ENCODE measurements at regions of chr9 and their contacts with region 1.

Region 1: GRCh38 chr9:108386859-108387384 is 468.9 kb downstream of the ACTL7B start:
- DNase-seq: no peak
- ATAC-seq: no peak
- H3K4me3 Mint-ChIP-seq: no peak overlapping the region
- H3K27ac Mint-ChIP-seq: no peak overlapping the region
- H3K4me1 Mint-ChIP-seq: no peaks in the 10 kb centered on the region
- H3K27me3 Mint-ChIP-seq: peaks cover 7% of the 10 kb centered on the region
- CTCF ChIP-seq: no peak

Region 2: DNA sequence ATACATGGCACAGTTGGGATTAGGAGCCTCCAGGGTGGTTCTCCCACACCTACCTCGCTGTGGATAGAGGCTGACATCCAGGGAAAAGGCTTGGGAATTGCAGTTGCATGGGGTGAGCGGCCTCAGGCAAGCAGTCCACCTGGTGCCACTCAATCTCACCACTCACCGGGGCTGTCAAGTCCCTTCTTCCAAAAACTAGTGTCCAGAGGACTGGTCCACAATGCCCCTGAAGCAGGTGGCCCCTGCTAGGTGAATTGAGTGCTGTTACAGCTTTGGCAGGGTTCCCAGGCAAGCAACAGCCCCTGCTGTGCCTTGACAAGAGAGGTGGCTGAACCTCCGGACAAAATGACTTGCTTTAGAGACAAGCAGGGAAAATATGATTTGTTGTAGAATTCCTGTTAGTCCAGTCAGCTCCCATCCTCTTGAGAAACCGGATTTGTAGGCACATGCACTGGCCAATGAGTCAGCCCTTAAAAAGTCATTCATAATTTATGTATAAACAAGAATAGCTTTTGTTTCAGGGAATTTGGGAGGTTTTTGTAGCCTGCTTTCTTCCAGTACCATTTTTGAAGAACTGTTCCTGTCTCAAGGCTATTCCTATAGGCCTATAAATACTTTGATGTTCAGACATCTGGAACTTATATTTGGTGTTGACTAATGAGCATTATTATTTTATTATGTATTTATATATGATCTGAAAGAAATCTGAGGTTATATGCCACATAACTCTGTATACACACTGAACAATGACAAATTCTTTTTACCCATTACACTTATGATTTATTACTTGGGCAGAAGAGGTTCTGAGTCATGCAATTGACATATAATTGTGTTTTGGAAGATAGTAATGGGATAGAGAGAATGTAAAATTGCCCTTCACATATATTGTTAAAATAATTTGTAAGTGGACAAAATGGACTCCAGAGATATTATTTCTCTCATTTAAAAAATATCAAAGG is 57.8 kb after region 1 on chr9:
- CTCF ChIA-PET with region 1: no interaction called
- POLR2A ChIA-PET with region 1: no interaction called
- intact Hi-C with region 1: loop called (anchors 10 kb)
- DNase-seq: no peak
- ATAC-seq: no peak
- H3K4me3 Mint-ChIP-seq: no peak overlapping the region
- H3K27ac Mint-ChIP-seq: no peak overlapping the region
- H3K4me1 Mint-ChIP-seq: no peaks in the 10 kb centered on the region
- H3K27me3 Mint-ChIP-seq: no peaks in the 10 kb centered on the region
- CTCF ChIP-seq: no peak